ENCODE measurements at regions of chr2 and their contacts with region 1.

Region 1: GRCh38 chr2:168455648-168456520 is at the start of gene CERS6:
- DNase-seq: peak; percentile 96 to 98 (median 97)
- ATAC-seq: peak; percentile 91 to 99 (median 98)
- H3K4me3 ChIP-seq: peak within 1 kb of the TSS; percentile 67 to 95 (median 86)
- H3K27ac ChIP-seq: peak within 1 kb of the TSS; percentile 80 to 97 (median 88)
- H3K4me1 ChIP-seq: peaks cover 0 to 38% (median 11%) of the 10 kb centered on the region in 12 donors
- H3K27me3 ChIP-seq: no peaks in the 10 kb centered on the region
- CTCF ChIP-seq: peak in 1 of 12 donors; percentile 10
- POLR2A ChIP-seq: peak; percentile 8 to 95
- total RNA-seq, gene CERS6: 48.1 to 78.0 (median 67.1) TPM

Region 2: DNA sequence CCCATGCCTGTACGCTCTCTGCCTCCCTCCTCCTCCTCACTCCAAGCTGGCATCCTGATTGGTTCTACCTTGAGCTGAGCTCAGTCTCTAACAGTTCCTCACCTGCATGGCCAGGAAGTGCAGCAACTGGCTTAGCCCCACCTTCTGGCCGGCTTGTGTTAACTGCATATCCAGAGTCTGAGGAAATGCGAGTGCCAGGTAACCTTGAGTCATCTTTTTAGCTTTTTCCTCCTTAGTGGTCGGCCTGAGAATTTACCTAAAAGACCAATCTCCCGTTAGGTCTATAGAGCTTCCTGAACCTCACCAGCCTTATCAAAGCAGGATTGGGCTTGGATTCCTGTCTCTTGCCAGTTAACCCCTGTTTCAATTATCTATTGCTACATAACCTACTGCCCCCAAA is 119.0 kb before region 1 on chr2:
- intact Hi-C with region 1: no loop called
- DNase-seq: peak in 1 of 5 donors; percentile 29
- ATAC-seq: peak in 3 of 4 donors; percentile 59 to 76 (median 64)
- H3K4me3 ChIP-seq: no peak overlapping the region
- H3K27ac ChIP-seq: no peak overlapping the region
- H3K4me1 ChIP-seq: no peaks in the 10 kb centered on the region
- H3K27me3 ChIP-seq: peaks cover 0 to 2% (median 0%) of the 10 kb centered on the region in 9 donors
- CTCF ChIP-seq: peak in 10 of 12 donors; percentile 22 to 44 (median 33)
- POLR2A ChIP-seq: no peak

Region 3: DNA sequence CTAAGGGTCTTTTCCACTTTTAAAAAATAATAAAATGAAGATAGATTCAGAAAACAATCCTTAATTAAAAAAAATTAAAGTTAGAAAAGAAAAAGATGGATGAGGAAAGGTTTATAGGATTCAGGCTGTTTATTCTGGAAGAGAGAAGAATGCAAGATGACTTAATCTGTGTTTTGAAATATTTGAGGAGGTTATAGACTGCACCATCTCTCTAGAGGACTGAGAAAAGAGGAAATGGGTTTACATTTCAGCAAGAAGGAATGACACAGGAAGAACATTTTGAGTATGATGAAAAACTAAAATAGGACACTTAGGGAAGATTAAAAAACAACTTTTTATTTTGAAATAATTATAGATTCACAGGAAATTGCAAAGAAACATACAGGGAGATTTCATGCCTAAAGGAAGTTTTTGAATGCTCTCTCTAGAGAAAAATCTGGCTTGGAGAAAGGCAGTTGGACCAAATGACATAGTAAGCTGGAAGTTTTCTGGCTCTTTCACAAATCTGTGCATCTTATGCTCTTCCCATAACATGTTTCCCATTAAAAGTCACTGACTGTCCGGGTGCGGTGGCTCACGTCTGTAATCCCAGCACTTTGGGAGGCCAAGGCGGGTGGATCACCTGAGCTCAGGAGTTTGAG is 75.2 kb after region 1 on chr2:
- intact Hi-C with region 1: loop called in 3 of 10 experiments (anchors 5 to 10 kb)
- DNase-seq: no peak
- ATAC-seq: peak in 1 of 4 donors; percentile 32
- H3K4me3 ChIP-seq: no peak overlapping the region
- H3K27ac ChIP-seq: peak overlapping the region in 11 of 12 donors; percentile 56 to 84 (median 77)
- H3K4me1 ChIP-seq: peaks cover 7 to 84% (median 37%) of the 10 kb centered on the region in 12 donors
- H3K27me3 ChIP-seq: no peaks in the 10 kb centered on the region
- CTCF ChIP-seq: no peak
- POLR2A ChIP-seq: no peak

Region 4: DNA sequence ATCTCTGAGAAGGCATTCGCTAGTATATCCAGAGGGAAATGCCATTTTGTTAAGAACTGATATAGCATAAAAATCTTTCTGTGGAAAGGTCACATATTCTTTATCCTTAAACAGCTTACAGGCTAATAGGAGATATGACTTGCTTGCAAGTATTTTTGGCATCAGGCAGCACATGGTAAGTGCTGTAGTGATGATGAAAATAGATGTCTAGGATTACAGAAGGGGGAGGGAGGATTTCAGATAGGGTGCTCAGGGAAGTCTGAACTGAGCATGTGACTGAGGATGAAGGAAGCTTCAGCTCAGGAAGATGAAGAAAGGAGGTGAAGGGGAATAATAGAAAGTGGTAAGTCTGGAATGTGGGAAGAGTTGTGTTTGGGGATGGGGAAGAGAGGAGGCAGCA is 188.1 kb after region 1 on chr2:
- intact Hi-C with region 1: loop called in 2 of 10 experiments (anchors 5 to 10 kb)
- DNase-seq: peak in 1 of 5 donors; percentile 22
- ATAC-seq: peak; percentile 52 to 82 (median 66)
- H3K4me3 ChIP-seq: peak overlapping the region in 1 of 12 donors; percentile 16
- H3K27ac ChIP-seq: peak overlapping the region; percentile 36 to 85 (median 64)
- H3K4me1 ChIP-seq: peaks cover 0 to 43% (median 18%) of the 10 kb centered on the region in 12 donors
- H3K27me3 ChIP-seq: no peaks in the 10 kb centered on the region
- CTCF ChIP-seq: no peak
- POLR2A ChIP-seq: no peak

Region 5: GRCh38 chr2:168751104-168751740 is 295.3 kb after region 1 on chr2:
- intact Hi-C with region 1: loop called in 2 of 10 experiments (anchors 5 to 10 kb)
- DNase-seq: no peak
- ATAC-seq: peak in 3 of 4 donors; percentile 10 to 56 (median 40)
- H3K4me3 ChIP-seq: no peak overlapping the region
- H3K27ac ChIP-seq: peak overlapping the region in 3 of 12 donors; percentile 7 to 37 (median 8)
- H3K4me1 ChIP-seq: peaks cover 0 to 53% (median 14%) of the 10 kb centered on the region in 12 donors
- H3K27me3 ChIP-seq: no peaks in the 10 kb centered on the region
- CTCF ChIP-seq: no peak
- POLR2A ChIP-seq: no peak

Measured in heart left ventricle (tissue), 16 donors.